ENCODE measurements at regions of chr19 and their contacts with region 1.

Region 1: DNA sequence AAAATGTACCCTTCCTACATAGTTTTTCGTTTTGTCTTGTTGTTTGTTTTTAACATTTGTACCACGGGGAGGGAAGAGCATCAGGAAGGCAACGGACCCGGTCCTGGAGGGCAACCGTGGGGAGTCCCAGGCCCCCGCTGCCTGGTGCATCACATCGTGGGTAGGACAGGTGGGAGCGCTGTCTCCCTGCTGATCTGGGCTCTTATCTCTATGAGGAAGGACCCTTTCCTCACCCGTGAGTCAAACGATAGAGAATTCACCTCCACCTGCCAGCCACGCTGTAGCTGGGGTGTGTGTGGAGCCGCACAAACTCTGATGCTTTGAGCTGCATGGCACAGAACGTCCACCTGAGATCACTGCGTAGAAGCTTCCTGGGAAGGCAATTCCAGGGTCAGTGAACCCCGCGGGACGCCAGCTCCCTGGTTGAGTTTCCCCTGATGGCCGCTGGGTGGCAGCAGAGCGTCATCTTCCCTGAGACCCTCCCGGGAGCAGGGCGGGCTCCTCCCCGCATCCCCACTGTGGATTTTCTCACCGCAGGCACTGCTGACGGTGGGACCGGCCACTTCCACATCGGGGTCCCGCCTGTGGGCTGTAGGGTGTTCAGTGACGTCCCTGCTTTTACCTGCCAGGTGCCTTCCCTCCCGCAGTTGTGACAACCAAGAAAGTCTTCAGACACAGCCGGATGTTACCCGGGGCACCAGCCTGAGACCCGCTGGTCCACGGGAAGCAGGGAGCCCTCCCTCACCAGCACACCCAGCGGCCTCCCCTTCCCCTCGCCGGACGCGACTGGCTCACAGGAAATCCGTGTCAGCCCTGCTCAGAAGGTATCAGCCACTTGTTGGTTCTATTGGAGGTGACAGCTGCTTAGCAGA is 54.7 kb downstream of the ZNF787 start:
- DNase-seq: no peak
- H3K4me3 ChIP-seq: 0 out of 2 replicates have a peak overlapping the region, but pooled peaks have one; percentile 25
- H3K27me3 ChIP-seq: no peaks in the 10 kb centered on the region; the same call in 1 of the 2 replicates
- CTCF ChIP-seq: peak; percentile 88

Region 2: DNA sequence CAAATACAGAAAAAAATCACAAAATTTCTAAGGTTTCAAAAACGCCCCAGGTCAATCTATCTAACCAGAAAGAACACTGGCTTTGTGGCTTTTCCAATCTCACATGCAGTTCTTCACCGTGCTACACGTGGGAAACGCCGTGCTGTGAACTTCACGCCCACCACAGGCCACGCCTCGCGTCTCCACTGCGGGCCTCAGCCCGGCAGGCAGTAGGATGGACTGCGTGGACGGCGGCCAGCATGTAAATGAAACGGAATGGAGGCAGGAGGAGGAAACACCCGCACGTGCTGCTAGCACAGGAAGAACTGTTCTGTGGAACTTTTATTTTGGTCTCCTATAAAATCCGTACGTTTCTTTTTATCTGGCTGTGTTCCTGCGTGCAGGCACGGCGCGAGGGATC is 30.9 kb after region 1 on chr19:
- CTCF ChIA-PET with region 1: no interaction called
- POLR2A ChIA-PET with region 1: no interaction called
- DNase-seq: no peak
- H3K4me3 ChIP-seq: no peak overlapping the region
- H3K27me3 ChIP-seq: no peaks in the 10 kb centered on the region
- CTCF ChIP-seq: no peak

Region 3: GRCh38 chr19:56170261-56170660 is 103.9 kb after region 1 on chr19:
- CTCF ChIA-PET with region 1: interaction called, 18 read pairs
- POLR2A ChIA-PET with region 1: no interaction called
- DNase-seq: no peak
- H3K4me3 ChIP-seq: no peak overlapping the region
- H3K27me3 ChIP-seq: no peaks in the 10 kb centered on the region
- CTCF ChIP-seq: no peak

Region 4: DNA sequence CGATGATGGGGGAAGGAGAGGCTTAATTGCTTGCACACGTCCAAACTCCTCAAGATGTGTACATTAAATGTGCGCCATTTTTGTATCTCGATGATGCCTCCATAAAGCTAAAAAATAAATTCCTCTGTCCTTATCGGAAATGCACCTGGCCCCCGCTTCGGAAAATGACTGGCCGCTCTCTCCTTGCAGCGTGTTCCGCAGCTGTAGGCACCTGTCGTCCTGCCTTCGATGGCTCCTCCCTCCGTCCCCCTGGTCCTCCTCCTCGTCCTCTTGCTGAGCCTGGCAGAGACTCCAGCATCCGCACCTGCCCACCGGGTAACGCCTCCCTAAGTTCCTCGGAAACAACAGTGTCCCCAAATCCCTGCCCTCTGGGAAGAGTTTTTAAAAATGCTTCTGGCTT is 110.5 kb after region 1 on chr19:
- CTCF ChIA-PET with region 1: interaction called, 18 read pairs
- POLR2A ChIA-PET with region 1: no interaction called
- DNase-seq: no peak
- H3K4me3 ChIP-seq: no peak overlapping the region
- H3K27me3 ChIP-seq: no peaks in the 10 kb centered on the region
- CTCF ChIP-seq: no peak

Region 5: GRCh38 chr19:56333505-56333904 is 267.1 kb after region 1 on chr19:
- CTCF ChIA-PET with region 1: interaction called, 20 read pairs
- POLR2A ChIA-PET with region 1: no interaction called
- DNase-seq: no peak
- H3K4me3 ChIP-seq: no peak overlapping the region
- H3K27me3 ChIP-seq: no peaks in the 10 kb centered on the region
- CTCF ChIP-seq: peak; percentile 76